Activated CD8-positive, alpha-beta T cell treated with anti-CD3 and anti-CD28 coated beads, Interleukin-2, amount 10 ng/mL, durations not matched to agents 7 days and 5 days (primary cell): ENCODE measurements at regions of chr6 and their contacts with region 1.

Region 1: GRCh38 chr6:27672113-27672799 is 199.4 kb upstream of the ZNF184 start:
- DNase-seq: peak; percentile 72
- ATAC-seq: peak; percentile 62
- H3K4me3 Mint-ChIP-seq: peak overlapping the region; percentile 46
- H3K27ac Mint-ChIP-seq: peak overlapping the region; percentile 12
- H3K4me1 Mint-ChIP-seq: peaks cover 53% of the 10 kb centered on the region
- H3K27me3 Mint-ChIP-seq: peaks cover 56% of the 10 kb centered on the region

Region 2: GRCh38 chr6:27687154-27688013 is 15.1 kb after region 1 on chr6:
- CTCF ChIA-PET with region 1: interaction called, 16 read pairs
- POLR2A ChIA-PET with region 1: interaction called, 3 read pairs
- DNase-seq: peak; percentile 86
- ATAC-seq: peak; percentile 80
- H3K4me3 Mint-ChIP-seq: peak overlapping the region; percentile 85
- H3K27ac Mint-ChIP-seq: peak overlapping the region; percentile 86
- H3K4me1 Mint-ChIP-seq: peaks cover 28% of the 10 kb centered on the region
- H3K27me3 Mint-ChIP-seq: peaks cover 15% of the 10 kb centered on the region